MCF 10A (cell line): ENCODE measurements at regions of chrX and their contacts with region 1.

Region 1: DNA sequence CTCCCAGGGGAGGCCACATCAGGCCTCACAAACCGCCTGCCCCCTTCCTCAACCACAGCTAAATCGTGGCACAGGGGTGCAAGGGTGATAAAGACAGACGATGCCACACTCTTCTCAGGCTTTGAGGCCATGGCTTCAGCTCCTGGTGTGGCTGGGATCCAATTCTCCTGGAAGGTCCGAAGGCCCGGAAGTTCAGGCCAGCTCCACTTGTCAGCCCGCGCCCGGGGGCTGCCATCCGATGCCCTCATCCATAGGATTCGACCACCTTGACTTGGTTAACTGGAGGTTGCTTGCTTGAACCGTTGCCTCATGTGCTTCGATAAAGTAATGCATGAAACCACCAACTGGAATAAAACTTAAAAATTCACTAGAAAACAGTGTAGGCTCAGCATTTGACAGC is 8.2 kb downstream of the TEX13C start:
- DNase-seq: no peak
- H3K4me3 Mint-ChIP-seq: no peak overlapping the region
- H3K27ac Mint-ChIP-seq: no peak overlapping the region
- H3K4me1 Mint-ChIP-seq: no peaks in the 10 kb centered on the region
- H3K27me3 Mint-ChIP-seq: no peaks in the 10 kb centered on the region
- CTCF ChIP-seq: no peak

Region 2: GRCh38 chrX:124605511-124605910 is 722.4 kb before region 1 on chrX:
- CTCF ChIA-PET with region 1: no interaction called
- POLR2A ChIA-PET with region 1: no interaction called
- intact Hi-C with region 1: no loop called
- DNase-seq: no peak
- H3K4me3 Mint-ChIP-seq: no peak overlapping the region
- H3K27ac Mint-ChIP-seq: no peak overlapping the region
- H3K4me1 Mint-ChIP-seq: no peaks in the 10 kb centered on the region
- H3K27me3 Mint-ChIP-seq: no peaks in the 10 kb centered on the region
- CTCF ChIP-seq: no peak

Region 3: DNA sequence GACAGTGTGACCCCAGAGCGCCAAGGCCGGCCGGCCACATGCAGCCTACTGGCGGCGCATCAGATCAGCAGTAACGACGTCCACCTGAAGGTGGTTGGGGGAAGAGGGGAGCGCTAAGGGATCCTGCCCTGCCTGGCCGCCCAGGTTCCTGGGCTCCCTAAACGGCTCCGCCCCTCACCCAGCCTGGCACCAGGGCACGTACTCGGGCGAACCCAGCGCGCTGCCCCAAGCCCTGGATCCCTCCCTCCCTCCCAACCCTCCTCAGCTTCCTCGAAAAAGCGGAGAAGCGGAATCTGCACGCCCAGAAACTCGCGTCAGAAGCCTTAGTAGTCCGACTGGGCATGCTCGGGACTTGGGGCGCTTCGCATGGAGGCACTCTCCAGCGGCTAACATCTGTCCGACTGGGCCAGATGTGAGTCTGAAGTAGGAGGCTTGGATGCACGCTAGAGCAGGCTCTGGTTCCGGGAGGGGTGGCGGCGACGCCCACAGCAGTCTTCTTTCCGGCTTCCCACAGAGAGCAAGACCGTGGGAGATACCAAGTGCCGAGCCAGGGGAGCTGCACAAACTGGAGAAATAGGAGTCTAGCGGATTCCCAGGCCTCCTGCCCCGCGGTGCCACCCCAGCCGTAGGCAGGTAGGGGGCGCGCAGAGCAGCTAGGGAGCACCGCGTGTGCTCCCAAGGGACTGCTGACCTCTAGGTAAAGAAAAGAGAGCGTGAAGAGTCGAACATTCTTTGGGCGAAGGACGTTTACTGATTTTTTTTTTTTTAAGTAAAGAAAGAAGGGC is 122.6 kb before region 1 on chrX:
- CTCF ChIA-PET with region 1: no interaction called
- POLR2A ChIA-PET with region 1: interaction called, 14 read pairs
- intact Hi-C with region 1: no loop called
- DNase-seq: no peak
- H3K4me3 Mint-ChIP-seq: peak overlapping the region; percentile 77
- H3K27ac Mint-ChIP-seq: peak overlapping the region; percentile 19
- H3K4me1 Mint-ChIP-seq: peaks cover 5% of the 10 kb centered on the region
- H3K27me3 Mint-ChIP-seq: no peaks in the 10 kb centered on the region
- CTCF ChIP-seq: no peak

Region 4: GRCh38 chrX:125620715-125621587 is 293.1 kb after region 1 on chrX:
- CTCF ChIA-PET with region 1: no interaction called
- POLR2A ChIA-PET with region 1: no interaction called
- intact Hi-C with region 1: no loop called
- DNase-seq: no peak
- H3K4me3 Mint-ChIP-seq: no peak overlapping the region
- H3K27ac Mint-ChIP-seq: no peak overlapping the region
- H3K4me1 Mint-ChIP-seq: no peaks in the 10 kb centered on the region
- H3K27me3 Mint-ChIP-seq: no peaks in the 10 kb centered on the region
- CTCF ChIP-seq: no peak